ENCODE measurements at regions of chr3 and their contacts with region 1.

Region 1: GRCh38 chr3:49929331-49930240 is at the start of gene MON1A:
- DNase-seq: peak; percentile 97
- H3K4me3 Mint-ChIP-seq: peak within 1 kb of the TSS; percentile 94
- H3K27ac Mint-ChIP-seq: peak within 1 kb of the TSS; percentile 69
- H3K4me1 Mint-ChIP-seq: peaks cover 21% of the 10 kb centered on the region
- H3K27me3 Mint-ChIP-seq: no peaks in the 10 kb centered on the region
- CTCF ChIP-seq: no peak
- total RNA-seq, gene MON1A: 8.4 and 10.6 TPM in 2 replicates

Region 2: DNA sequence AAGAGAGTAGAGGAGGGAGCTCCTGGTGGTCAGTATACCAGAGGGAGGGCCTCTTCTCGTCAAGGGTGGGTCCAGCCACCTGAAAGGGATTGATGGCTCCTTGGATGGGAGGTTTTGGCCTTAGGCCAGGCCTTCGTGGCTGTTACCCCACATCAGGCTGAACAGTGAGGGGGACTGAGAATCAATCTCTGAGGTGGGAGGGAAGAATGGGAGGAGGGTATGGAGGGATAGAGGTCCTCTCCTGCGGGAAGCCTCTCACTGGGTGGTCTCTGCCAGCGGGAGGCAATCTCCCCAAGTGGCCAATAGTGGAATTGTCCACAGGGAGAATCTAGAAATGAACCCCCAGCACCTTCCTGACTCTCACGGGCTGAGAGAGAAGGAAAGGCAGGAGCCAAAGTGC is 321.8 kb before region 1 on chr3:
- CTCF ChIA-PET with region 1: no interaction called
- intact Hi-C with region 1: no loop called
- DNase-seq: no peak
- H3K4me3 Mint-ChIP-seq: no peak overlapping the region
- H3K27ac Mint-ChIP-seq: no peak overlapping the region
- H3K4me1 Mint-ChIP-seq: peaks cover 10% of the 10 kb centered on the region
- H3K27me3 Mint-ChIP-seq: no peaks in the 10 kb centered on the region
- CTCF ChIP-seq: no peak

Region 3: DNA sequence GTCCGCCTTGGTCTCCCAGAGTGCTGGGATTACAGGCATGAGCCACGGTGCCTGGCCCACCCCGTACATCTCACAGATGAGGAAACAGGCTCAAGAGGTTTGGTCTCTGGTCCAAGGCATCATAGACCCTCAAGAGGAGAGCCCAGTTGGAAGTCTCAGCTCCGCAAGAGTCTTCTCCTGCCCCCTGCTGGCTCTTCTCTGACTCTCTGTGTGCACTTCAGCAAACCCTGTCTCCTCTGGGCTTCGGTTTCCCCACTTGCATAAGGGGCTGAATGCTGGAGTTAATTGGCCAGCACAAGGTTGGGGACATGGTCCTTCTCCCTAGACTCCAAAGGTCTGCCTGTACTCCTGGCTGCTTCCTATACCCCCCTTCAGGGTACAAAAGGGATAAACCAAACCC is 29.8 kb before region 1 on chr3:
- CTCF ChIA-PET with region 1: interaction called, 15 read pairs
- intact Hi-C with region 1: no loop called
- DNase-seq: no peak
- H3K4me3 Mint-ChIP-seq: peak overlapping the region; percentile 87
- H3K27ac Mint-ChIP-seq: peak overlapping the region; percentile 96
- H3K4me1 Mint-ChIP-seq: no peaks in the 10 kb centered on the region
- H3K27me3 Mint-ChIP-seq: no peaks in the 10 kb centered on the region
- CTCF ChIP-seq: peak; percentile 23

Region 4: DNA sequence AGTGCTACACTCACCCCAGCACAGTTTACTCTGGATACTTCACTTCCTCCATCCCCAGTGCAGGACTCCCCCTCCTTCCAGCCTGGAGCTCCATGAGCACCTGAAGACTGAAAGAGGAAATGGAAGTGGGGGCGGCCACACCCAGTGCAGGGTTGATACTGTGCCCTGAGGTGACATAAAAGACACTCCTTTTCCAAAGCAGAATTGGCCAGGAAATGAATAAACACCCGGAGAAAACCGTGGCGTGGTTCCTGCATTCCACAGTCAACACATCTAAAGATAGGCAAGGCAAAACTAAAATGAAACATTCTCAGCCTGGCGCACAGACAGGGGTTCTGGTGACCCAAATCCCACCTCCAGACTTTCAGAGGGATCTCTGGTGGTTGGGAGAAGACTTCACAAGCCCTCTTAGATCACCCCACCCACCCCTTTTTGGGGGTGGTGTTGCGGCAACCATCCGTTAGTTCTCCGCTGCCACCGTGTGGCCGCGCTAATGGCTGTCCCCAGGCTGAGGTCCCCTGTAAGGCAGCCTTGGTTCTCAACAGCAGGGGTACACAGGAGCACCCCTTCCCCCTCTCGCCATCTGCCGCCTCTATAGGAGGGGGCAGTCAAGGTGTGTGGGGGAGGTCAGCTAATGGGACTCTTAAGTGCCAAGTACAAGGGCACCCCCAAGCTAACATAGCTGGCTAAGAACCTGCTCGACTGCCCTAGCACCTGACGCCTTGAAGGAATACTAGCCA is 23.4 kb before region 1 on chr3:
- CTCF ChIA-PET with region 1: interaction called, 18 read pairs
- intact Hi-C with region 1: no loop called
- DNase-seq: peak; percentile 65
- H3K4me3 Mint-ChIP-seq: peak overlapping the region; percentile 54
- H3K27ac Mint-ChIP-seq: peak overlapping the region; percentile 80
- H3K4me1 Mint-ChIP-seq: peaks cover 24% of the 10 kb centered on the region
- H3K27me3 Mint-ChIP-seq: no peaks in the 10 kb centered on the region
- CTCF ChIP-seq: peak; percentile 68

Region 5: DNA sequence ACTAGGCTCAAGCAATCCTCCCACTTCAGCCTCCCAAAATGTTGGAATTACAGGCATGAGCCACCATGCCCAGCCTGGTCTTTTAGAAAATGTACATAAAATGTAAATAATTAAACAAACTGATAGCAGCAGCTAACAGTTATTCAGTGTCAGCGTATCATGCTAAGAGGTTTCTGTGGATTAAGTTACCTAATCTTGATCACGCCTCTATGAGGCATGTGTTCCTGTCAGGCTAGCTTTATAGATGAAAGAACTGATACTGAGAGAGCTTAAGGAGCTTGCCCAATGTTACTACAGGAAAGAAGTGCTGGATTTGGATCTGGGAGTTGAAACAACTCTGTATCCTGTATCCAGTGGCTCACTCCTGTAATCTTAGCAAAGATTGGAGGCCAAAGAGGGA is 14.7 kb before region 1 on chr3:
- CTCF ChIA-PET with region 1: interaction called, 11 read pairs
- intact Hi-C with region 1: no loop called
- DNase-seq: no peak
- H3K4me3 Mint-ChIP-seq: no peak overlapping the region
- H3K27ac Mint-ChIP-seq: no peak overlapping the region
- H3K4me1 Mint-ChIP-seq: peaks cover 8% of the 10 kb centered on the region
- H3K27me3 Mint-ChIP-seq: no peaks in the 10 kb centered on the region
- CTCF ChIP-seq: no peak

Region 6: GRCh38 chr3:49939858-49940666 is 10.5 kb after region 1 on chr3 and contains the start of gene RBM6:
- CTCF ChIA-PET with region 1: interaction called, 10 read pairs
- intact Hi-C with region 1: no loop called
- DNase-seq: peak; percentile 96
- H3K4me3 Mint-ChIP-seq: peak within 1 kb of the TSS; percentile 100
- H3K27ac Mint-ChIP-seq: peak within 1 kb of the TSS; percentile 87
- H3K4me1 Mint-ChIP-seq: peaks cover 8% of the 10 kb centered on the region
- H3K27me3 Mint-ChIP-seq: no peaks in the 10 kb centered on the region
- CTCF ChIP-seq: no peak
- total RNA-seq, gene RBM6: 69.6 and 72.1 TPM in 2 replicates

Measured in Calu3 (cell line).